ENCODE measurements at regions of chr1 and their contacts with region 1.

Region 1: DNA sequence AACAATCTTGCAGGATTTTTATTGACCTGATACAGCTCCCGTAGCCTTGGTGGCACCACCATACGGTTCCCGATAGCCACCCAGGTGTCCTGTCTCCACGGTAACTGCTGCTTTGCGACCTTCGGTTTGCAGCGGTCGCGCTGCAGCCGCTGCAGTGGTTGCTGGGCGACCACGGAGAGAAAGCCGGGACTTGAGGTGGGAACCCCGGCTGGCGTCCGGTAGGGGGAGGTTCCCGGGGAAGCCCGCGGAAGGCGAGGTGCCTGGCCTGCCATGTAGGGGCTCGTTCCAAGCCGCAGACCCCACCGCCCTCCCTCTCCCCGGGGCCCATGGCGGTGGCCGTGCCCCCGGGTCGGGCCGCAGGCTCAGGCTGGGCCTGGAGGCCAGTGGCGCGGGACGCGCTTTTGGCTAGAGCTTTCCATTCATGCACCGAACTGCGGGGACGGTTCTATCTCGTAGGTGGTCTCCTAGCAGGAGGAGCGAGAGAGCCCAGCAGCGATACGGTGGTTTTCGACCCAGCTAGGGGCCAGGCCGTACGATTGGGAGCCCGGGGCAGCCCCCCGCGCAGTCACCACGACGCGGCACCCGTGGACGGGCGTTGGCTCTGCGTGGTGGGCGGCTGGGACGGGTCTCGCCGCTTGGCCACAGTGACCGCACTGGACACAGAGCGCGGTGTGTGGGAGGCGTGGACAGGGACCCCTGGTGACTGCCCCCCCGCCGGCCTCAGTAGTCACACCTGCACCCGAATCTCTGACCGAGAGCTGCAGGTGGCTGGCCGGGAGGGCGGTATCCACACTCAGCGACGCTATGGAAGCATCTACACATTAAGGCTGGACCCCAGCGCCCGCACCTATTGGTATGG is at the start of gene KLHDC9:
- DNase-seq: peak; percentile 90 to 95 (median 94)
- ATAC-seq: peak; percentile 96
- H3K4me3 ChIP-seq: peak within 1 kb of the TSS; percentile 64 to 68
- H3K27ac ChIP-seq: peak within 1 kb of the TSS; percentile 46 to 87 (median 64)
- H3K4me1 ChIP-seq: peaks cover 20% of the 10 kb centered on the region
- H3K27me3 ChIP-seq: no peaks in the 10 kb centered on the region
- CTCF ChIP-seq: peak in 4 of 7 experiments; percentile 18 to 55 (median 48)
- POLR2A ChIP-seq: peak in 2 of 3 donors; percentile 40 to 45
- total RNA-seq, gene KLHDC9: 13.5 to 22.7 TPM

Region 2: DNA sequence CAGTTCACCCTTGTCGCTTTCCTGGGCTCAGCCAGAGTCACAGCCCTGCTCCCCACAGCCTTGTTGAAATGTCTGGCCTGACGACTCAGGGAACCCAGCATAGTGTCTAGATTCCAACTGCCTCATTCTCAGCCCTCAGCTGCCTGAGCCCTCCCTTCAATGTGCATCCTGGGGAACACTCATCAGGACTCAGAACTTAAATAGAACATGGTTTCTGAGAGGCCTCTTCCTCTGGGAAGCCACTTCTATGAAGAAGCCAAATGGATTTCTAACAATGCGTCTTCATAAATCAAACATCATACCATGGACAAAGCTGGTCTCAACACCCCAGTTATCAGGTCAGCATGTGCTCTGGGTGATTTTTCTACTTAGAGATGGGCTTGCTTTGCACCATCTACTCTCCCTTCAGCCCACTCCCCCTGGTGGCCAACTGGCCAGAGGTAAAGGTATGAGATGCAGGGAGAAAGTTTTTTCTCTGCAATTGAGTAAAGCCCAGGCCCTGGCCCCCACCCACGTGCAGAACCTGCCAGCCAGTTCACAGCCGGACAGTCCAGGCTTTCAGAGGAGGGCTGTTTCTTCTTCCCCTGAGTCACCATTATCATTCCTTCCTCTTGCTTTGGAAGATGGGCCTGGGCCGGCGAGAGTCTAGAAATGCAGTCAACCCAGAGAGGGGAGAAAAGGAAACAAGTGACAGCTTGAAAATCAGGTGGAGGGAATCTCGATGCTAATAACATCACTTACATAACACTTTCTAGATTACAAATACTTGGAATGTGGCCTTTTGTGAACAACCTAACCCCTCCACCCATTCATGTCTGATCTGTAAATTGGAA is 267.9 kb before region 1 on chr1:
- intact Hi-C with region 1: loop called (anchors 10 kb)
- DNase-seq: peak; percentile 69 to 75 (median 72)
- ATAC-seq: peak; percentile 62
- H3K4me3 ChIP-seq: no peak overlapping the region
- H3K27ac ChIP-seq: no peak overlapping the region
- H3K4me1 ChIP-seq: no peaks in the 10 kb centered on the region
- H3K27me3 ChIP-seq: no peaks in the 10 kb centered on the region
- CTCF ChIP-seq: peak; percentile 48 to 71 (median 65)
- POLR2A ChIP-seq: no peak

Region 3: DNA sequence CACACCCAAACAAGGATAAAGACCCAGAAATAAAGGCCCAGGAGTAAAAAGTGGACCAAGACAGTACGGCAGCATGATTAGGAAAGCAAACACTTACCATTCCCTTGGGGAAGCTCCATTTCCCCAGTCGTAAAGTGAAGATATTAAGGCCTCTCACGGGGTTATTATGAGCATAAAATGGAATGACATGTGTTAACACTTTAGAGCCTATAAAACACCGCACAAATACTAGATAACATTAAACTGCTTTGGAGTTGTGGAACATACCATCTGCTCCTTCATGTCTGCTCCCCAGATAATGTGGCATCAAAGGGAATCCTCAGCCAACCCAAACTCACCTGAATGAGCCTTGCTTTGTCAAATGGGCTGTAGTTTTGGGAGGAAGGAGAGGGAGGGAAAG is 134.9 kb before region 1 on chr1:
- intact Hi-C with region 1: no loop called
- DNase-seq: no peak
- ATAC-seq: no peak
- H3K4me3 ChIP-seq: no peak overlapping the region
- H3K27ac ChIP-seq: no peak overlapping the region
- H3K4me1 ChIP-seq: no peaks in the 10 kb centered on the region
- H3K27me3 ChIP-seq: no peaks in the 10 kb centered on the region
- CTCF ChIP-seq: no peak
- POLR2A ChIP-seq: no peak

Region 4: GRCh38 chr1:160997323-160998038 is 101.0 kb before region 1 on chr1:
- intact Hi-C with region 1: loop called (anchors 10 kb)
- DNase-seq: peak; percentile 68 to 81 (median 72)
- ATAC-seq: peak; percentile 90
- H3K4me3 ChIP-seq: no peak overlapping the region
- H3K27ac ChIP-seq: peak overlapping the region in 3 of 4 donors; percentile 22 to 67 (median 42)
- H3K4me1 ChIP-seq: peaks cover 8% of the 10 kb centered on the region
- H3K27me3 ChIP-seq: no peaks in the 10 kb centered on the region
- CTCF ChIP-seq: peak; percentile 18 to 75 (median 65)
- POLR2A ChIP-seq: no peak

Region 5: GRCh38 chr1:161069731-161070270 is 28.6 kb before region 1 on chr1 and contains the start of gene ARHGAP30:
- intact Hi-C with region 1: loop called (anchors 5 kb)
- DNase-seq: peak in 2 of 4 donors; percentile 38 to 80
- ATAC-seq: no peak
- H3K4me3 ChIP-seq: no peak within 1 kb of the TSS
- H3K27ac ChIP-seq: peak within 1 kb of the TSS in 2 of 4 donors; percentile 27 to 64
- H3K4me1 ChIP-seq: no peaks in the 10 kb centered on the region
- H3K27me3 ChIP-seq: no peaks in the 10 kb centered on the region
- CTCF ChIP-seq: no peak
- POLR2A ChIP-seq: peak in 2 of 3 donors; percentile 26 to 56
- total RNA-seq, gene ARHGAP30: 3.1 to 4.9 TPM